MCF 10A (cell line): ENCODE measurements at regions of chr7 and their contacts with region 1.

Region 1: GRCh38 chr7:73811760-73812168 is 19.0 kb upstream of the CLDN4 start:
- DNase-seq: peak; percentile 84
- H3K4me3 Mint-ChIP-seq: no peak overlapping the region
- H3K27ac Mint-ChIP-seq: no peak overlapping the region
- H3K4me1 Mint-ChIP-seq: peaks cover 5% of the 10 kb centered on the region
- H3K27me3 Mint-ChIP-seq: no peaks in the 10 kb centered on the region
- CTCF ChIP-seq: peak; percentile 77

Region 2: DNA sequence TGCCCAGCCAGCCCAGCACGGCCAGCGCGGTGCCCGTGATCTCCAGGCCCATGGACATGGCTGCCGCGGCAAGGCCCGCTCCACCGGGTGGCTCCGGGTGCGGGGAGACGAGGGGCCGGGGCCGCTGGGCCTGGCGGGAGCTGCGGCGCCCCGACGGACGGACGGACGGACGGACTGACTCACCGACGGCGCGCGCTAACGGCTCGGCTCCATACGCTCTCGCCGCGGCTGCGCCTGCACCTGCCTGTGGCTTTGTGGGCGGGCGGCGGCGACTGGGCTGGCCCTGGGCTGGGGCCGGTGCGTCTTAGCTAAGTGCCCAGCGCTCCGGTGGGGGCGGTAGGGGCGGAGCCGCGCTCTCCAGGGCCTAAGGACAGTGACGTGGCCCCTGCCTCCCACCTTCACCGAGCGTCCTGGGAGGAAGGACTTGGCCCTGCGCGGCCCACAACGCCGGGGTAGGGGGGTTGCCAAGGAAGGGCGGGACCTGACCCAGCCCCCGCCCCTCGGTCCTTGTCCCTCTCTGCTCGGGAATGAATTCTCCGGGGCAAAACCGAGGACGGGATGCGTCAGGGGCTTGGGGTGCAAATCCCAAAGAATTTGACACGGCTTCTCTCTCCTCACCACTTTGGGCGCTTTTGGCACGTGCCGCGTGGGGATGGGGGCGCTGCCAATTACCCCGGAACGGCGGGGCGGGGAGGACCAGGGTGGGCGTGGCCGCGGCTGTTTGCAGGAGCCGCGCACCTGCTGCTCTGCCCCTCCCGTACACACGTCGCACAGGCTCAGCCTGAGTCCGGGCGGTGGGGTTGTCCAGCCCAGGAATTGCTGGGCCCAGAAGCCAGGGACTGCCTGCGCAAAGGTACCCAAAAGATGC is 41.5 kb before region 1 on chr7 and contains the start of gene CLDN3:
- CTCF ChIA-PET with region 1: no interaction called
- POLR2A ChIA-PET with region 1: no interaction called
- intact Hi-C with region 1: no loop called
- DNase-seq: no peak
- H3K4me3 Mint-ChIP-seq: peak within 1 kb of the TSS; percentile 28
- H3K27ac Mint-ChIP-seq: no peak within 1 kb of the TSS
- H3K4me1 Mint-ChIP-seq: no peaks in the 10 kb centered on the region
- H3K27me3 Mint-ChIP-seq: peaks cover 12% of the 10 kb centered on the region
- CTCF ChIP-seq: no peak
- total RNA-seq, gene CLDN3: not detected in 2 replicates

Region 3: DNA sequence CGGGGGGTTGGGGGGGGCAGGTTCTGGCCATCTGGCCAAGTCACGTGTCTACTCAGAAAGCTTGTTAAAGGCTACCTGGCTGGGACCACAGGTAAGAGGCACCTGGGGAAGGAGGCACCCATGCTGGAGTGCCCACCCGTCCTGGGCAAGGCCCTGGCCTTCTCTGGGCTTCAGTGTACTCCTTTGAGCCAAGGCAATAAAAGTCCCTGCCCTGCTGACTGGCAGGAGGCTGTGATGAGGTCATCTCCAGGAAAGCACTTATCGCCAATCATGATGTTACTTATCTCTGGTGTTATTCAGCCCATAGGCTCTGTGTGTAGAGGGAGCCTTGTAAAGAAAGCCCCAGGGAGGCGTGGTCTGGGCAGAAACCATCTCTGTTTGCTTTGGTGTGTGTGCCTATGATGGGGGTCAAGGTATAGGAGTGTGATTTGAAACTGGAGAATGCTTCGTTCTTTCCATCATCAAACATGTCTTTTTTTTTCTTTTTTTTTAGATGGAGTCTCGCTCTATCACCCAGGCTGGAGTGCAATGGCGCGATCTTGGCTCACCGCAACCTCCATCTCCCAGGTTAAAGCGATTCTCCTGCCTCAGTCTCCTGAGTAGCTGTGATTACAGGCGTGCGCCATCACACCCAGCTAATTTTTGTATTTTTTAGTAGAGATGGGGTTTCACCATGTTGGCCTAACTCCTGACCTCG is 16.5 kb after region 1 on chr7:
- CTCF ChIA-PET with region 1: interaction called, 11 read pairs
- POLR2A ChIA-PET with region 1: interaction called, 3 read pairs
- intact Hi-C with region 1: no loop called
- DNase-seq: peak; percentile 58
- H3K4me3 Mint-ChIP-seq: peak overlapping the region; percentile 15
- H3K27ac Mint-ChIP-seq: peak overlapping the region; percentile 61
- H3K4me1 Mint-ChIP-seq: peaks cover 35% of the 10 kb centered on the region
- H3K27me3 Mint-ChIP-seq: no peaks in the 10 kb centered on the region
- CTCF ChIP-seq: no peak

Region 4: DNA sequence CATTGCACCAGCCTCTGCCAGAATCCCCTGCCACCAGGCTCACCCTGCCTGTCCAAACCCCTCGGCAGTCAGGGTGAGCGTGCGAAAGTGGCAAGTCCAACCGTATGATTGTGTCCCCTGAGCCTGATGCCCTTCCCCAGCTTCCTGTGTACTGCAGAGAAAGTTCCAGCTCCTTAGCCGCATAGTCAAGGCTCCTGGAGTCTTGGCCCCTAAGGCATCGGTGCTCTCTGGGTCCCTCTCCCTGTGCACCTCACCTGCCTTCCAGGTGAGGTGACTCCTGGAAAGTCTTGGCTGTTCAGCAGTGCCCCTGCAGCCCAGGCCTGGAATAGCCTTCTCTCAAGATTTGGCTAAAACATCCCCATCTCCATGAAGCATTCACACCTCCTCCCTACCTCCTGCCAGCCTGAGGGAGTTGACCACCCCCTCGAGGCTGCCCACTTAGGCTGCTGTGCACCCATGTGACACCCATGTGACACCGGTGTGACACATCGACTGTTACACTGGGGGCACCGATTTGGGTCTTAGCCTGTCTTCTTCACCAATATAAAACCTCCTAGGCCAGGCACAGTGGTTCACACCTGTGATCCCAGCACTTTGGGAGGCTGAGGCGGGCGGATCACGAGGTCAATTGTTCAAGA is 160.1 kb after region 1 on chr7:
- CTCF ChIA-PET with region 1: no interaction called
- POLR2A ChIA-PET with region 1: no interaction called
- intact Hi-C with region 1: no loop called
- DNase-seq: peak; percentile 36
- H3K4me3 Mint-ChIP-seq: no peak overlapping the region
- H3K27ac Mint-ChIP-seq: peak overlapping the region; percentile 16
- H3K4me1 Mint-ChIP-seq: no peaks in the 10 kb centered on the region
- H3K27me3 Mint-ChIP-seq: peaks cover 14% of the 10 kb centered on the region
- CTCF ChIP-seq: peak; percentile 8